ENCODE measurements at regions of chr3 and their contacts with region 1.

Region 1: DNA sequence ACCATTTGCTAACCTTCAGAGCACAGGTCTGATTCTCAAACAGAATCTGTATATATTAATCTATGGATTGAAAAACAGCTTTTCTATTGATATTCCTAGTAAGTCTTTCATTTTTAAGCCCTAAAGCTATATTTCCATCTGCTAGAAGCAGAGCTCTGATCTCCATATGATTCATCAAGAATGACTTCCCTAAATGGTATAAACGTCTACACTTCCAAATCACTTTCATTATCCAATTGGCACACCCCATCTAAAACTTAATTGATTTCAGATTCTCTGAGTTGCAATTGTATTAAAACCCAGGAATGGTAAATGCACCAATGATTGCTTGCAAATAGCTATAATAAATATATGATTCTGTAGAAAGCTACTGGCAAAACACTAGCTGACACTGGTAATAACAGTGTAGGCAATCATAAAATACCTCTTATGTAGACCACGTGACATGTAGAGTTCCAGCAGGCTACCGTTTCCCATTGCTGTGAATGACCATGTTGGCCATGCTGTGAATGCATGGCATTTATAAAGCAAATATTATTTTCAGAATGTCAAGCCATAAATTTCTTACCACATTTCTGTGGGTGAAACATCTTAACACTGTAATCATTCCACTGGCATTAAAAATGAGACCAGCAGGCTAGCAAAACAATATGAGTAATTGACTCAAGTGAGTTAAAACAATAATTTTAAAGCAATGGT is 226.0 kb downstream of the ZMAT3 start:
- DNase-seq: no peak
- ATAC-seq: no peak

Region 2: GRCh38 chr3:178454726-178455125 is 390.8 kb before region 1 on chr3:
- intact Hi-C with region 1: loop called (anchors 10 kb)
- DNase-seq: peak; percentile 80
- ATAC-seq: peak; percentile 97

Region 3: DNA sequence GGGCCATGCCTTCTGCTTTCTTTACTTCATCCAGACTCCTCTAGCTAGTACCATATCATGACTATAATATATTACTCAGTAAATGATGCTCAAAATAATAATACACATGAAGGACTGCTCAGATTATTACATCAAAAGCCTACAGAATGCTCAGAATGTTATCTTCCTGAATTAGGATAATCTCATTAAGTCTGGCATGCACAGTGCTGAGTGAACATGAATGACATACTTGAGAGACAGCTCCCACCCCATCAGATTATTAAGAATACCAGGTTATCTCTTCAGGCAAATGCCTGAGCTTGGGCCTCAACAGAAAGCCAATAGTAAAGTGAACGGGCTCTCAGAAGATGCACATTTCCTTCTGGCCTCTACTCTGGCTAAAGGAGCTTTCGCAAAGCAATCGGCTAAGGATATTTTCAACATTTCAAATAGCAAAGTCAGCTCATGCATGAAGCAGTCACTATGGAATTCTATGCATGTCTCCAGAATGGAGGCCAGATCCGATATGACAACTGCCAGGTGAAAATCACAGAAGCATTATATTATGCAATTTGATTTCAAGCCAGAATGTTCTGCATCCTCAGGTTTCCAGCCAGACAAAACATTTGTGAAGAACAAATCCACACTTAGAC is 186.8 kb before region 1 on chr3:
- intact Hi-C with region 1: no loop called
- DNase-seq: no peak
- ATAC-seq: no peak

Region 4: GRCh38 chr3:178671791-178672190 is 173.8 kb before region 1 on chr3:
- intact Hi-C with region 1: loop called (anchors 10 kb)
- DNase-seq: no peak
- ATAC-seq: peak; percentile 45